Ovary (tissue), 10 donors: ENCODE measurements at regions of chr15 and their contacts with region 1.

Region 1: DNA sequence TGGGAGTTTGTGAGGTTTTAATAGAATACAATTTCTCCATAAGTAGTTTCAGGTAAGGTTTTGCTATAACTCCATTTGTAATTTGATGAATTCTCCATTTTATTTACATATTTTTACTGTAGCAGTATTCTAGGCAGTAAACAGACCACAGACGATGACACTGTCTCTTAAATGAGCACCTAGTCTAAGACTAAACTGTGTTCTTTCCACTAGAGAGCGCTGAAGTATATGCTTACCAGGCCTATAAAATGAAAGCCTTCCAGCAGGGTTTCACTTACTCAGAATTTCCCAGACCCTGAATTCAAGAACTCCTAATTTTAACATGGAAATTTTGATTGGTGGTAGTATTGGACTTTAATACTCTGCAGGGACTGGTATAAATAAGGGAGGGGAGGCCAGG is 41.6 kb downstream of the POLG start:
- DNase-seq: no peak
- H3K4me3 ChIP-seq: no peak overlapping the region
- H3K27ac ChIP-seq: no peak overlapping the region
- H3K4me1 ChIP-seq: no peaks in the 10 kb centered on the region
- H3K27me3 ChIP-seq: no peaks in the 10 kb centered on the region
- CTCF ChIP-seq: no peak
- EP300 ChIP-seq: no peak
- POLR2A ChIP-seq: no peak

Region 2: DNA sequence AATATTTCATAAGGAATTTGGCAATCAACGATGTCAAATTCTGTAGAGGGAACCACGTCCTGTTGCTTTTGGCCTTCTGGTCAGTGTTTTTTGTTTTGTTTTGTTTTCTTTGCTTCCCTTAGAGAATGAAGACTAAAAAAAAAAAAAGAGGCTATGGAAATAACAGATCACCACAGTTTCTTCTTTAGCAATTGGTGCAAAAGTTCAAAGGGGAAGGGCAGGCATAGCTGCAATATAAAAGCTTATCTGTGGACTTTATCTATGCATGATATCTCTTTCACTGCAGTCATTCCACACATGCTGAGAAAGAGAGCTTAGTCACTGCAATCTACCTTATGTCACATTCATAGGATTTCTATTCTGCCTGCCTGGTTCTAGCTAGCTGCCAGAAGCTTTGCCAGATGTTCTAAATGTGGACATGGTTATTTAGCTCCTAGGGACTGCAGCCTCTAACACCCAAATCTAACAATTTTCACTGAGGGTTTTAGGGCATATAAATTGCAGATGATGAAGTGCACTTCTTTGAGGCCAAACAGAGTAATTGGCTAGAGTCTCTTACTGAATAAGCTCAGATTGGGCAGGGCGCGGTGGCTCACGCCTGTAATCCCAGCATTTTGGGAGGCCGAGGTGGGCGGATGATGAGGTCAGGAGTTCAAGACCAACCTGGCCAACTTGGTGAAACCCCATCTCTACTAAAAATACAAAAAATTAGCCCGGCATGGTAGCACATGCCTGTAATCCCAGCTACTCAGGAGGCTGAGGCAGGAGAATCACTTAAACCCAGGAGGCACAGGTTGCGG is 1673.7 kb before region 1 on chr15:
- intact Hi-C with region 1: loop called in 1 of 4 experiments (anchors 5 kb)
- DNase-seq: no peak
- H3K4me3 ChIP-seq: no peak overlapping the region
- H3K27ac ChIP-seq: no peak overlapping the region
- H3K4me1 ChIP-seq: no peaks in the 10 kb centered on the region
- H3K27me3 ChIP-seq: no peaks in the 10 kb centered on the region
- CTCF ChIP-seq: no peak
- EP300 ChIP-seq: no peak
- POLR2A ChIP-seq: no peak

Region 3: DNA sequence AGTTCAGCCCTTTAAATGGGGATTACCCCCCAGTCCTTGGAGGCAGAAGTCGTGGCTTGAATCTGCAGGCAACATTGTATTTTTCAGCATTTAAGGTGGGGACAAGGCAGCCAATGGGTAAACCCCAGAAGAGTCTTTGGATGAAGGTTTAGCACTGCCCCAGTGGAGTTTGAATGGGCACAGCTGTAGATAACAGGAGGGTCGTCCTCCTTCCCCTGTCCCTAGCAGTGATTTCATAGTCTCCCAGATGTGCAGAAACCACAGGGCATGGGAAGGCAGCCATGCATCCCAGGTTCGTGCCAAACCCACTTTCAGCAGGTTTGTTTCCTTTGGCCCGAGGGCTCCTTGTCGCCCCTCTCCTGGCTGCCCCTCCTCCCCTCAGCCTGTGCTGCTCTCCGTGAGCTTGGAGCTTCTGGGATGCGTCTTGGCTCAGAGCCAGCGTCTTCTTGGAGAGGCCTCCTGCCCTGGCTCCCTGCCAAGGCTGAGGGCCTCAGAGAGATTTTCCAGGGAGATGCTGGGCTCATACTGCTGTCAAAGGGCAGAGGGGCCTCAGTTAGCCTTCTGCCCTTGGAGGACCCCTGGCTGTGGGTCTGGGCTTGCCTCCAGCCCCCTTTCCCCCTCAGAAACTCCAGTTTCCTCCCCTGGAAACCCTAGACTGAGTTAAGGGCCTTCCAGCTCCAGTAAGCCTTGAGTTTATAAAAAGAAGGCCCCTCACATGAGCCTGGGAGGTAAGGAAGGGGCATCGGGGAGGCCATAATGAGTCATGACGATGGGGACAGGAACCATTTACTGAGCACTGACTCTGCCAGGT is 90.6 kb after region 1 on chr15:
- intact Hi-C with region 1: no loop called
- DNase-seq: peak; percentile 51 to 74 (median 59)
- H3K4me3 ChIP-seq: no peak overlapping the region
- H3K27ac ChIP-seq: no peak overlapping the region
- H3K4me1 ChIP-seq: peaks cover 2% of the 10 kb centered on the region
- H3K27me3 ChIP-seq: no peaks in the 10 kb centered on the region
- CTCF ChIP-seq: no peak
- EP300 ChIP-seq: no peak
- POLR2A ChIP-seq: no peak